Thyroid gland (tissue), 4 donors: ENCODE measurements at regions of chr15 and their contacts with region 1.

Region 1: DNA sequence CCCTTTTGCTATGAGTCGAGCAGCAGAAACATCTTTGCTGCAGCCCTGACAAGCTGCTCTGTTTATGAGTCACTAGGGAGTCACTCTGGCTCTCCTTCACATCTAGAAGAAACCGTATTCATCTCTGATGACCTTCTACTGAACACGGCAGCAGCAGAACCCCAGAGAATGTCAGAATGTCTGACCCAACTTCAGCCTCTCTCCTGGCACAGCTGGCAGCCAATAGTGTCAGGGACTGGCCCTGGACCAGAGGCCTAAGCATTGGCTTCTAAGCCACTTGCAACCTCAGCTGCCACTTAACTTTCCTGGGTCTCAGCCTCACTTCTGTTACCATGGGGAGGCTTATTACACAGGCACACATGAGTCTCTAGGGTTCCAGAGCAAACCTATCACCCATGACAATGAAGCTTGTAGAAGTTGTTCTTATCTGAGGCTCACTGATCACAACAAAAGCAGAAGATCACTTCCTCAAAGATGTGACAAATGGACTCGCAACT is 184.1 kb upstream of the TLE3 start:
- DNase-seq: no peak
- H3K4me3 ChIP-seq: no peak overlapping the region
- H3K27ac ChIP-seq: no peak overlapping the region
- H3K4me1 ChIP-seq: peaks cover 25 to 28% of the 10 kb centered on the region in 2 donors
- H3K27me3 ChIP-seq: no peaks in the 10 kb centered on the region
- CTCF ChIP-seq: no peak
- POLR2A ChIP-seq: no peak

Region 2: GRCh38 chr15:70023064-70023768 is 258.6 kb before region 1 on chr15:
- intact Hi-C with region 1: loop called (anchors 10 kb)
- DNase-seq: no peak
- H3K4me3 ChIP-seq: no peak overlapping the region
- H3K27ac ChIP-seq: peak overlapping the region; percentile 84 to 92 (median 86)
- H3K4me1 ChIP-seq: peaks cover 17 to 35% of the 10 kb centered on the region in 2 donors
- H3K27me3 ChIP-seq: no peaks in the 10 kb centered on the region
- CTCF ChIP-seq: no peak
- POLR2A ChIP-seq: no peak

Region 3: GRCh38 chr15:70111203-70112073 is 170.4 kb before region 1 on chr15:
- intact Hi-C with region 1: loop called (anchors 10 kb)
- DNase-seq: peak; percentile 86 to 87
- H3K4me3 ChIP-seq: no peak overlapping the region
- H3K27ac ChIP-seq: peak overlapping the region; percentile 64 to 92 (median 87)
- H3K4me1 ChIP-seq: peaks cover 18 to 30% of the 10 kb centered on the region in 2 donors
- H3K27me3 ChIP-seq: no peaks in the 10 kb centered on the region
- CTCF ChIP-seq: no peak
- POLR2A ChIP-seq: peak in 1 of 2 donors; percentile 47